ENCODE measurements at regions of chr16 and their contacts with region 1.

Region 1: GRCh38 chr16:2926650-2927646 is 15.2 kb downstream of the FLYWCH1 start:
- DNase-seq: peak; percentile 93
- ATAC-seq: peak; percentile 99
- H3K4me3 Mint-ChIP-seq: no peak overlapping the region
- H3K27ac Mint-ChIP-seq: peak overlapping the region; percentile 2
- H3K4me1 Mint-ChIP-seq: peaks cover 14% of the 10 kb centered on the region
- H3K27me3 Mint-ChIP-seq: no peaks in the 10 kb centered on the region

Region 2: GRCh38 chr16:2663553-2664546 is 263.1 kb before region 1 on chr16:
- CTCF ChIA-PET with region 1: no interaction called
- POLR2A ChIA-PET with region 1: no interaction called
- DNase-seq: peak; percentile 49
- ATAC-seq: peak; percentile 75
- H3K4me3 Mint-ChIP-seq: peak overlapping the region; percentile 12
- H3K27ac Mint-ChIP-seq: peak overlapping the region; percentile 87
- H3K4me1 Mint-ChIP-seq: peaks cover 26% of the 10 kb centered on the region
- H3K27me3 Mint-ChIP-seq: no peaks in the 10 kb centered on the region

Region 3: DNA sequence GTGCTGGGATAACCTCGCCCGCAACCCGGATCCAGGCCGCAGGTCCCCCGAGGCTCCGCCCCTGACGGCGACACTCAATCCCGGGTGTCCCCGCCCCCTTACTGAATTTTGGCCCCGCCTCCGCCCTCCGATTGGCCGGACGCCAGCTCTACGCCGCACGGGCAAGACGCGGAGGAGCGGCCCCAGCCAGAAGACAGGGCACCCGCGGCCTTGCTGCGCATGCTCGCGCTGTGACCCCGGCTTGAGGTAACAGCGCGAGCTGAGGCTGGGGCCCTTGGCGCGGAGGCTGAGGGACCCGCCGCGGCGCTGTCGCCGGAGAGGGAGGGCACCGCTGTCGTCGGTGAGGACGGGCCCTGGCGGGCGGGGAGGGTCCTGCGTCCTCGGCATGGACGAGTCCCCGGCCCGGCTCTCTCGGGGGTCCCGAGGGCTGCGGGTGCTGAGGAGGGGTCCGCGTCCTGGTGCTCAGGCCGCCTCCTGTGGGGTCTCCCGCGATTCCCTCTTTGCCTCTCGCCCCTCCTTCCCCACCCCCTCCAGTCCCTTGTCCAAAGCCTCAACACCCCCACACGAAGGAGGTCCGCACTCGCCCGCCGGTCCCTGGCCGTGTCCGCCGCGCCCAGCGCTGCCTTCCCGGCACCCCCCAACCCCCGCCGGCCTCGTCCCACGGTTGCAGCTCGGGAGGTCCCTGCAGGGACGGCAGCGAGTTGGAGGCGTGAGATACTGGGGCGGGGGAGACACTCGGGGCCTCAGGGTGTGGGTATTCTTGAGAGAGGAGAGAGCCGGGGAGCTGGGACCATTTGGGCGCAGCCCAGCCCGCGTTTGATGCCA is 43.7 kb before region 1 on chr16 and contains the start of gene FLYWCH2:
- CTCF ChIA-PET with region 1: interaction called, 17 read pairs
- POLR2A ChIA-PET with region 1: no interaction called
- DNase-seq: peak; percentile 100
- ATAC-seq: peak; percentile 88
- H3K4me3 Mint-ChIP-seq: peak within 1 kb of the TSS; percentile 87
- H3K27ac Mint-ChIP-seq: peak within 1 kb of the TSS; percentile 97
- H3K4me1 Mint-ChIP-seq: peaks cover 14% of the 10 kb centered on the region
- H3K27me3 Mint-ChIP-seq: peaks cover 4% of the 10 kb centered on the region
- total RNA-seq, gene FLYWCH2: 22.5 to 22.8 TPM

Region 4: GRCh38 chr16:2905431-2906387 is 21.2 kb before region 1 on chr16:
- CTCF ChIA-PET with region 1: interaction called, 32 read pairs
- POLR2A ChIA-PET with region 1: no interaction called
- DNase-seq: peak; percentile 98
- ATAC-seq: peak; percentile 79
- H3K4me3 Mint-ChIP-seq: peak overlapping the region; percentile 91
- H3K27ac Mint-ChIP-seq: peak overlapping the region; percentile 90
- H3K4me1 Mint-ChIP-seq: peaks cover 26% of the 10 kb centered on the region
- H3K27me3 Mint-ChIP-seq: peaks cover 5% of the 10 kb centered on the region

Region 5: DNA sequence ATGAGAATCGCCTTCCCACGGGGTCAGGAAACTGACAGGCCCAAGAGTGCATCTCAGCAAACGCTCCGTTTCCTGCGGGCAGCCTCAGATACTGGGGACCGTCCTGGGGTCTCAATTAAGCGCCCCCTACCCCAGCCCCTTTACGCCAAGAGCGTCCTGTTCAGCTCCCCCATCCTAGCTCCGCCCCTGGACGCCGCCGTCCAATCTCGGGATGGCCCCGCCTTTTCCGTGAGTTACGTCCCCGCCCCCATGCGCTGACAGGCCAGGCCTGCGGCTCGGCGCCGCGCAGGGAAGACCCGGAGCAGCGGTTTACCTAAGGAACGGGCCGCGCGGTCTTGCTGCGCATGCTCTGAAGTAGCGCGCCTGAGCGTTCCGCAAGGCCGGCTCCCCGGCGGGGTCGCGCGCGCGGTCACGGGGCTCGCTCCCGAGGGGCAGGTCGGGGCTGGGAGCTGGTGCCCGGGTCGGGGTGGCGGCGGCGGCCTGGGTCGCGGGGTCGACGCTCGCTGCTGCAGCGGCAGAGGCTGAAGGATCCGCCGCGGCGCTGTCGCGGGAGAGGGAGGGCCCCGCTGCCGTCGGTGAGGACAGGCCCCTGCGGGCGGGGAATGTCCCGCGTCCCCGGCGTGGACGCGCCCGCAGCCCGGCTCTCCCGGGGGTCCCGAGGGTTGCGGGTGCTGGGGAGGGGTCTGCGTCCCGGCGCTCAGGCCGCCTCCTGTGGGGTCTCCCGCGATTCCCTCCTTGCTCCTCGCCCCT is 15.2 kb before region 1 on chr16 and contains the start of gene FLYWCH1:
- CTCF ChIA-PET with region 1: interaction called, 32 read pairs
- POLR2A ChIA-PET with region 1: interaction called, 3 read pairs
- DNase-seq: peak; percentile 99
- ATAC-seq: peak; percentile 96
- H3K4me3 Mint-ChIP-seq: peak within 1 kb of the TSS; percentile 88
- H3K27ac Mint-ChIP-seq: peak within 1 kb of the TSS; percentile 83
- H3K4me1 Mint-ChIP-seq: peaks cover 34% of the 10 kb centered on the region
- H3K27me3 Mint-ChIP-seq: peaks cover 5% of the 10 kb centered on the region
- total RNA-seq, gene FLYWCH1: 44.6 to 48.9 TPM

Region 6: GRCh38 chr16:2968738-2969544 is 42.0 kb after region 1 on chr16 and contains the start of gene PAQR4:
- CTCF ChIA-PET with region 1: interaction called, 10 read pairs
- POLR2A ChIA-PET with region 1: no interaction called
- DNase-seq: peak; percentile 87
- ATAC-seq: peak; percentile 76
- H3K4me3 Mint-ChIP-seq: peak within 1 kb of the TSS; percentile 79
- H3K27ac Mint-ChIP-seq: peak within 1 kb of the TSS; percentile 74
- H3K4me1 Mint-ChIP-seq: peaks cover 46% of the 10 kb centered on the region
- H3K27me3 Mint-ChIP-seq: peaks cover 19% of the 10 kb centered on the region
- total RNA-seq, gene PAQR4: 53.6 to 57.7 TPM

Region 7: DNA sequence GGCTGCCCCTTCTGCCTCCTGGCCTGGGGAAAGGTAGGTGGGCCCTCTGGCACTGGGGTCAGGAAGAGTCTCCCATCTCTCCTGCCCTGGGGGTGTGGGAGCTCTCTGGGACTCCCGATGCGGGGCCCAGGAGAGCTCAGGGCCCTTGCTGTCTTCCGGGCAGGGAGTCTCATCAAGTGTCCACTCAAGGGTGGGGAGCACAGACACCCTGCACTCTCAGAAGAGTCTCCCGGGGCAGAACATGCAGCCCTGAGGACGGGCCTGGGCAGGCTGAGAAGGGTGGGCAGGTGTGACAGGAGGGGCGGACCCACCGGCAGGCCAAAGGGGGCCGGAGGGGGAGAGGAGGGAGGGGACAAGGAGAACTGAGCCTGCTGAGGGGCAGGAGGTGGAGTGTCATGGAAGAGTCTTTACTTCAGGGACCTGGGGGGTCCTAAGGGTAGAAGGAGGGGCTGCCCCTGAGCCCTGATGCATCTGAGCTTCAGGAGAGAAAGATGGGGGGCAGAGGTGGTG is 61.7 kb after region 1 on chr16:
- CTCF ChIA-PET with region 1: no interaction called
- POLR2A ChIA-PET with region 1: no interaction called
- DNase-seq: no peak
- ATAC-seq: no peak
- H3K4me3 Mint-ChIP-seq: no peak overlapping the region
- H3K27ac Mint-ChIP-seq: no peak overlapping the region
- H3K4me1 Mint-ChIP-seq: peaks cover 5% of the 10 kb centered on the region
- H3K27me3 Mint-ChIP-seq: no peaks in the 10 kb centered on the region